B cell (primary cell): ENCODE measurements at regions of chr17 and their contacts with region 1.

Region 1: DNA sequence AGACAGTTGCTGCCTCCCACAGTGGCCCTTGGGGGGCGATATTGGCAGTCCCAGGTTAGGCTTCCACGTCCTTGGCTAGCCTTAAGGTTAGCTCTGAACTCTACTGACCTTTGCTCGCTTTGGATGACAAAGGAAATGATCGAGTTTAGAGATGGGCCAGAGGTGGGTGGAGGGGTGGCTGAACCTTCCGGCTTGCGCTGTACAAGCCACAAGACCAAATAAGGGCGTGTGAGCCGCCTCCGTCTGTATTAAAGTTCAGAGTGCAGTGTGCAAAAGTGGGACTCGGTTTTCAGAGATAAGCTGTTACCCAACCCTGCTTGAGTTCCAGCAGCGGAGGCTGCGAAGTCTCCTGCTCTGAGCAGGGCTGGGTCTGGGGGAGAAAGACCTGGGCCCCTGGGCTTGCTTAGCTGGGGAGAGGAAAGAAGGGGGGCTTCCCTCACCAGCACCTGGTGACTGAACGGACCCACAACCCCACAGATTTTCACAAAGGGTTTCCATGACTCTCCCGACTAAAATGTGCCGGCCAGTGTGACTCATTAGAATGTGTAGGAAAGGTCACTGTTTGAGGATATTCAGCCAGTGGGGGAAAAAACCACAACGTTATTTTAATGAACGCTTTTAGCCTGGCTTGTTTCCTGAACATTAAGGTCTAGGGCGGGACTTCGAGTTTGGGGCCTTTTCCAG is 67.2 kb downstream of the CENPV start:
- DNase-seq: peak; percentile 74
- ATAC-seq: peak; percentile 66
- H3K4me3 ChIP-seq: peak overlapping the region in 4 of 5 experiments; percentile 5 to 61 (median 44)
- H3K4me3 Mint-ChIP-seq: peak overlapping the region; percentile 86
- H3K27ac ChIP-seq: peak overlapping the region; percentile 91 to 94
- H3K27ac Mint-ChIP-seq: peak overlapping the region; percentile 98
- H3K4me1 ChIP-seq: peaks cover 59 to 63% of the 10 kb centered on the region in 2 donors
- H3K4me1 Mint-ChIP-seq: peaks cover 56% of the 10 kb centered on the region
- H3K27me3 ChIP-seq: no peaks in the 10 kb centered on the region
- H3K27me3 Mint-ChIP-seq: no peaks in the 10 kb centered on the region
- CTCF ChIP-seq: peak; percentile 47

Region 2: GRCh38 chr17:16215273-16215964 is 70.7 kb before region 1 on chr17 and contains the start of gene NCOR1:
- CTCF ChIA-PET with region 1: interaction called, 22 read pairs
- POLR2A ChIA-PET with region 1: interaction called, 4 read pairs
- intact Hi-C with region 1: loop called (anchors 1 kb)
- DNase-seq: peak; percentile 92
- ATAC-seq: peak; percentile 85
- H3K4me3 ChIP-seq: peak within 1 kb of the TSS; percentile 77 to 93 (median 92)
- H3K4me3 Mint-ChIP-seq: peak within 1 kb of the TSS; percentile 96
- H3K27ac ChIP-seq: peak within 1 kb of the TSS; percentile 78 to 90
- H3K27ac Mint-ChIP-seq: peak within 1 kb of the TSS; percentile 91
- H3K4me1 ChIP-seq: peaks cover 25 to 35% of the 10 kb centered on the region in 2 donors
- H3K4me1 Mint-ChIP-seq: peaks cover 43% of the 10 kb centered on the region
- H3K27me3 ChIP-seq: no peaks in the 10 kb centered on the region
- H3K27me3 Mint-ChIP-seq: no peaks in the 10 kb centered on the region
- CTCF ChIP-seq: peak; percentile 44
- total RNA-seq, gene NCOR1: 217 and 229 TPM in 2 replicates

Region 3: DNA sequence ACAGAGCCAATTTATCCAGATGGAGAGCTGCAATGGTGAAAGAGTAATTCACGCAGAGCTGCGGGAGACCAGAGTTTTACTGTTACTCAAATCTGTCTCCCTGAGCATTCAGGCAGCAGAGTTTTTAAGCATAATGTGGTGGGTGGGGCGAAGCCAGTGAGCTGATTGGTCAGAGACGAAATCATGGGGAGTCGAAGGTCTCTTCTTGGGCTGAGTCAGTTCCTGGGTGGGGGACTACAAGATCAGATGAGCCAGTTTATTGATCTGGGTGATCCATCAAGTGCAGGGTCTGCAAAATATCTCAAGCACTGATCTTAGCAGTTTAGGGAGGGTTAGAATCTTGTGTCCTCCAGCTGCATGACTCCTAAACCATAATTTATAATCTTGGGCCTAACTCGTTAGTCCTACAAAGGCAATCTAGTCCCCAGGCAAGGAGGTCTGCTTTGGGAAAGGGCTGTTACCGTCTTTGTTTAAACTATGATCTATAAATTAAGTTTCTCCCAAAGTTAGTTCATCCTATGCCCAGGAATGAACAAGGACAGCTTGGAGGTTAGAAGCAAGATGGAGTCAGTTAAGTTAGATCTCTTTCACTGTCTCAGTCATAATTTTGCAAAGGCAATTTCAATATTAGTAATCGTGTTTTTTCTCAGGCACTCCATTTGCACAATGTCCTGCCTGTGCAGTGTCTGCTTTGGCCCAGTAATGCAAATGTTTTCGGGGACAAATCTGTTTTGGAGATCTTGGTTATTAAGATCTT is 42.1 kb before region 1 on chr17:
- CTCF ChIA-PET with region 1: no interaction called
- POLR2A ChIA-PET with region 1: no interaction called
- intact Hi-C with region 1: no loop called
- DNase-seq: no peak
- ATAC-seq: no peak
- H3K4me3 ChIP-seq: no peak overlapping the region
- H3K4me3 Mint-ChIP-seq: no peak overlapping the region
- H3K27ac ChIP-seq: no peak overlapping the region
- H3K27ac Mint-ChIP-seq: no peak overlapping the region
- H3K4me1 ChIP-seq: no peaks in the 10 kb centered on the region
- H3K4me1 Mint-ChIP-seq: peaks cover 2% of the 10 kb centered on the region
- H3K27me3 ChIP-seq: no peaks in the 10 kb centered on the region
- H3K27me3 Mint-ChIP-seq: no peaks in the 10 kb centered on the region
- CTCF ChIP-seq: no peak

Region 4: DNA sequence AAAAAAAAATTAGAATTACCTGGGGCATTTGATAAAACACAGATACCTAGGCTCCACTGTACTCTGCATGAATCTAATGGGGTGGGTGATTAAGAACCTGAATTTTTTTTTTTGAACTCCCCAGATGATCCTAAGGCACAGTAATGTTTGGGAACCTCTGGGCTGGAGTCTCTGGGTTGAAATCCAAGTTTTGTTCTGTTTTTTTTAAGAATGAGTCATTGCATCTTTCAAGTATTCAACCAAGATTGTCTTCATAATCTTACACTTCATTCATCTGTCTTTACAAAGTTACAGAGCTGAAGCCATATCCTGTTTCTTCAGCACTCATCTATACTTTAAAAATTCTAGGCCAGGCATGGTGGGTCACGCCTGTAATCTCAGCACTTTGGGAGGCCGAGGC is 16.4 kb before region 1 on chr17:
- CTCF ChIA-PET with region 1: interaction called, 14 read pairs
- POLR2A ChIA-PET with region 1: interaction called, 8 read pairs
- intact Hi-C with region 1: loop called (anchors 1 kb)
- DNase-seq: no peak
- ATAC-seq: no peak
- H3K4me3 ChIP-seq: no peak overlapping the region
- H3K4me3 Mint-ChIP-seq: no peak overlapping the region
- H3K27ac ChIP-seq: no peak overlapping the region
- H3K27ac Mint-ChIP-seq: peak overlapping the region; percentile 41
- H3K4me1 ChIP-seq: peaks cover 21 to 41% of the 10 kb centered on the region in 2 donors
- H3K4me1 Mint-ChIP-seq: peaks cover 30% of the 10 kb centered on the region
- H3K27me3 ChIP-seq: no peaks in the 10 kb centered on the region
- H3K27me3 Mint-ChIP-seq: no peaks in the 10 kb centered on the region
- CTCF ChIP-seq: no peak

Region 5: DNA sequence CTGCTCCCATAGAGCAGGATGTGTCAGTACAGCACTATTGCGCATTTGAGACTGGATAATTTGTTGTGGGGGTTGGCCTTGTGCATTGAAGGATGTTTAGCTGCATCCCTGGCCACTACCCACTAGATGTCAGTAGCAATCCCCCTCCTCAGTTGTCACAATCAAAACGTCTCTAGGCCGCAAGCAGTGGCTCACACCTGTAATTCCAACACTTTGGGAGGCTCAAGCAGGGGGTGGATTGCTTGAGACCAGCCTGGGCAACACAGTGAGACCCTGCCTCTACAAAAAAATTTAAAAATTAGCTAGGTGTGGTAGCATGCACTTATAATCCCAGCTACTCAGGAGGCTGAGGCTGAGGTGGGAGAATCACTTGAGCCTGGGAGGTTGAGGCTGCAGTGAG is 18.7 kb after region 1 on chr17:
- CTCF ChIA-PET with region 1: interaction called, 11 read pairs
- POLR2A ChIA-PET with region 1: no interaction called
- intact Hi-C with region 1: no loop called
- DNase-seq: peak; percentile 42
- ATAC-seq: no peak
- H3K4me3 ChIP-seq: no peak overlapping the region
- H3K4me3 Mint-ChIP-seq: no peak overlapping the region
- H3K27ac ChIP-seq: no peak overlapping the region
- H3K27ac Mint-ChIP-seq: no peak overlapping the region
- H3K4me1 ChIP-seq: peaks cover 0 to 7% of the 10 kb centered on the region in 2 donors
- H3K4me1 Mint-ChIP-seq: no peaks in the 10 kb centered on the region
- H3K27me3 ChIP-seq: no peaks in the 10 kb centered on the region
- H3K27me3 Mint-ChIP-seq: no peaks in the 10 kb centered on the region
- CTCF ChIP-seq: peak; percentile 49

Region 6: DNA sequence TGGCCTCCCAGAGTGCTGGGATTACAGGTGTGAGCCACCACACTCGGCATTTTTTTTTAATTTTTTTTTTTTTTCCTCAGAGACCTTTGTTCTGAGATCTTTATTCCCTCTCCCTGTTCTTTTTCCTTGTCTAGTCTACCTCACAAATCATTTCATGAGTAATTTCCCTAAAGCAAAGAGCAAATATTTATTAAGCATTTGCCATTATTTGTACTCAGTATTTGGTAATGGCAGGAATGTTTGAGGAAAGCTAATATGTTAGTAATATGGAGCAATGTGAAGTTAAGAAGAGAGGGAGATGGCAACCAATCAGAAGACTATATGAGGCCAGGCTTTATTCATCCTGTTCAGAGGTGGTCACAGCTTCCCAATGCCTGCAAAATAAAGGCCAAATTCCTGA is 53.8 kb after region 1 on chr17:
- CTCF ChIA-PET with region 1: no interaction called
- POLR2A ChIA-PET with region 1: no interaction called
- intact Hi-C with region 1: no loop called
- DNase-seq: no peak
- ATAC-seq: no peak
- H3K4me3 ChIP-seq: no peak overlapping the region
- H3K4me3 Mint-ChIP-seq: no peak overlapping the region
- H3K27ac ChIP-seq: no peak overlapping the region
- H3K27ac Mint-ChIP-seq: no peak overlapping the region
- H3K4me1 ChIP-seq: no peaks in the 10 kb centered on the region
- H3K4me1 Mint-ChIP-seq: no peaks in the 10 kb centered on the region
- H3K27me3 ChIP-seq: no peaks in the 10 kb centered on the region
- H3K27me3 Mint-ChIP-seq: no peaks in the 10 kb centered on the region
- CTCF ChIP-seq: no peak

Region 7: GRCh38 chr17:16353317-16354174 is 67.4 kb after region 1 on chr17 and contains the start of gene CENPV:
- CTCF ChIA-PET with region 1: interaction called, 17 read pairs
- POLR2A ChIA-PET with region 1: interaction called, 11 read pairs
- intact Hi-C with region 1: loop called (anchors 1 kb)
- DNase-seq: peak; percentile 86
- ATAC-seq: peak; percentile 87
- H3K4me3 ChIP-seq: peak within 1 kb of the TSS; percentile 51 to 78 (median 70)
- H3K4me3 Mint-ChIP-seq: peak within 1 kb of the TSS; percentile 94
- H3K27ac ChIP-seq: peak within 1 kb of the TSS in 1 of 2 donors; percentile 56
- H3K27ac Mint-ChIP-seq: peak within 1 kb of the TSS; percentile 80
- H3K4me1 ChIP-seq: peaks cover 8 to 16% of the 10 kb centered on the region in 2 donors
- H3K4me1 Mint-ChIP-seq: peaks cover 15% of the 10 kb centered on the region
- H3K27me3 ChIP-seq: no peaks in the 10 kb centered on the region
- H3K27me3 Mint-ChIP-seq: no peaks in the 10 kb centered on the region
- CTCF ChIP-seq: no peak
- total RNA-seq, gene CENPV: 15.8 and 17.7 TPM in 2 replicates

Region 8: DNA sequence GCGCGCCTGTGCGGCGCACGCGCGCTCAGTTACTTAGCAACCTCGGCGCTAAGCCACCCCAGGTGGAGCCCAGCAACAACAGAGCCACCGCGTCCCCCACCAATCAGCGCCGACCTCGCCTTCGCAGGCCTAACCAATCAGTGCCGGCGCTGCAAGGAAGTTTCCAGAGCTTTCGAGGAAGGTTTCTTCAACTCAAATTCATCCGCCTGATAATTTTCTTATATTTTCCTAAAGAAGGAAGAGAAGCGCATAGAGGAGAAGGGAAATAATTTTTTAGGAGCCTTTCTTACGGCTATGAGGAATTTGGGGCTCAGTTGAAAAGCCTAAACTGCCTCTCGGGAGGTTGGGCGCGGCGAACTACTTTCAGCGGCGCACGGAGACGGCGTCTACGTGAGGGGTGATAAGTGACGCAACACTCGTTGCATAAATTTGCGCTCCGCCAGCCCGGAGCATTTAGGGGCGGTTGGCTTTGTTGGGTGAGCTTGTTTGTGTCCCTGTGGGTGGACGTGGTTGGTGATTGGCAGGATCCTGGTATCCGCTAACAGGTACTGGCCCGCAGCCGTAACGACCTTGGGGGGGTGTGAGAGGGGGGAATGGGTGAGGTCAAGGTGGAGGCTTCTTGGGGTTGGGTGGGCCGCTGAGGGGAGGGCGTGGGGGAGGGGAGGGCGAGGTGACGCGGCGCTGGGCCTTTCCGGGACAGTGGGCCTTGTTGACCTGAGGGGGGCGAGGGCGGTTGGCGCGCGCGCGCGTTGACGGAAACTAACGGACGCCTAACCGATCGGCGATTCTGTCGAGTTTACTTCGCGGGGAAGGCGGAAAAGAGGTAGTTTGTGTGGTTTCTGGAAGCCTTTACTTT is 94.8 kb after region 1 on chr17 and contains the start of gene UBB:
- CTCF ChIA-PET with region 1: interaction called, 4 read pairs
- POLR2A ChIA-PET with region 1: interaction called, 10 read pairs
- intact Hi-C with region 1: no loop called
- DNase-seq: peak; percentile 97
- ATAC-seq: peak; percentile 89
- H3K4me3 ChIP-seq: peak within 1 kb of the TSS; percentile 73 to 96 (median 91)
- H3K4me3 Mint-ChIP-seq: peak within 1 kb of the TSS; percentile 84
- H3K27ac ChIP-seq: peak within 1 kb of the TSS; percentile 97 to 98
- H3K27ac Mint-ChIP-seq: peak within 1 kb of the TSS; percentile 97
- H3K4me1 ChIP-seq: peaks cover 32 to 43% of the 10 kb centered on the region in 2 donors
- H3K4me1 Mint-ChIP-seq: peaks cover 45% of the 10 kb centered on the region
- H3K27me3 ChIP-seq: no peaks in the 10 kb centered on the region
- H3K27me3 Mint-ChIP-seq: no peaks in the 10 kb centered on the region
- CTCF ChIP-seq: no peak
- total RNA-seq, gene UBB: 765 and 769 TPM in 2 replicates

Region 9: DNA sequence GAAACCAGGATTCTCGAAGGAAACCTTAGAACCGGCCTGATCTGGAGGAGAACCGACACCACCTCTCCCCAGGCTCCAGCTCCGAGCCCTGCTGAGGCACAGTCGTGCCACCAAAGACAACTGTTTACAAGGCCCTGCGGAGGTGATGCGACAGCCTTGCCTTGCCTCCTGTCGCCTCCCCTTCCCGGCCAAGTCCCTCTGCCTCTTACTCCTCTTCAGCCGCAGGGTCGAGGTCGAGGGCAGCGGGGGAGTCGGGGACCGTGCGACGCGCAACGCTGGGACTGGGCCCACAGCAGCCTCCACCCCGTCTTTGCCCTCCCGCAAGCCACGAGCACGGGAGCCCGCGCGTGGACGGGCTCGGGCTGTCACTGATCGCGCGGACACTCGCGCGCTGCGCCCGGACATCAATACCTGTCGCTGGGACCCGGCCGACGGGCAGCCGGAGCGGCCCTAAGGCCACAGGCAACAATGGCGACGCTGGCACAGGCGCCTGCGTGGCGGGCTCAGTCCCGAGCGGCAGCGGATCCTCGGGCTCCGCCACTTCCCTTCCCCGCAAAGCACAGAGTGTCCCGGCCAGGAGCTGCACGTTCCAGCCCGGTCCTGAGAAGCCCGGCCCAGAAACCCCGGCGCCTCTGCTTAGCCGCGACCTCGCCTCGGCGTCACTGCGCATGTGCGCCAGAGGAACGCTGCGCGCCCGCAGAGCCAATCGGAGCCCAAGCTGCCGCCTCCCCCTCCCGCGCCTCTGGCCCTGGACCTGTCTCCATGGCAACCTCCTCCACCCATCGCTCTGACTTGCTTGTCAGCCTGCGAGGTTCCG is 282.6 kb after region 1 on chr17 and contains the start of gene ZNF287:
- CTCF ChIA-PET with region 1: no interaction called
- POLR2A ChIA-PET with region 1: no interaction called
- intact Hi-C with region 1: loop called (anchors 2 kb)
- DNase-seq: peak; percentile 97
- ATAC-seq: peak; percentile 97
- H3K4me3 ChIP-seq: peak within 1 kb of the TSS; percentile 7 to 77 (median 69)
- H3K4me3 Mint-ChIP-seq: peak within 1 kb of the TSS; percentile 83
- H3K27ac ChIP-seq: peak within 1 kb of the TSS; percentile 39 to 83
- H3K27ac Mint-ChIP-seq: peak within 1 kb of the TSS; percentile 92
- H3K4me1 ChIP-seq: peaks cover 16 to 18% of the 10 kb centered on the region in 2 donors
- H3K4me1 Mint-ChIP-seq: peaks cover 15% of the 10 kb centered on the region
- H3K27me3 ChIP-seq: no peaks in the 10 kb centered on the region
- H3K27me3 Mint-ChIP-seq: no peaks in the 10 kb centered on the region
- CTCF ChIP-seq: no peak
- total RNA-seq, gene ZNF287: 16.6 and 19.3 TPM in 2 replicates